BJ (cell line): ENCODE measurements at regions of chr1 and their contacts with region 1.

Region 1: DNA sequence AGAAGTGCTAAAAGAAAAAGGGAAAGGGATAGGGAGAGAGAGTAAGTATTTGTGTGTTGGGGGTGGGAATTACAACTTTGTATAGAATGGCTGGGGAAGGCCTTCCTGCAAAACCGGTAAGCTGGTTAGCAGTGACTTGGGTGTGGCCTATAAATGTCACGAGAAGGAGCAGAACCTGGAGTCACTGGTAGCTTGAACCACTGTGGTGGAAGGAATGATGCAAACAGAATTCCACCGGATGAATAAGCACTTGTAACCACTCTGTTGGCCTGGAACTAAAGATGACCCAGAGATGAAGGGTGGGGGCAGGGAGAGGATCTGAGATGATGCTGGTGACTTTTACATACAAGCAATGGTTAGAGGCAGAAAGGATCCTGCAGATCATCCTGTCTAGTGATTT is 8.9 kb downstream of the XKR8 start:
- DNase-seq: peak; percentile 92
- H3K4me3 ChIP-seq: no peak overlapping the region
- H3K27me3 ChIP-seq: no peaks in the 10 kb centered on the region
- CTCF ChIP-seq: no peak

Region 2: DNA sequence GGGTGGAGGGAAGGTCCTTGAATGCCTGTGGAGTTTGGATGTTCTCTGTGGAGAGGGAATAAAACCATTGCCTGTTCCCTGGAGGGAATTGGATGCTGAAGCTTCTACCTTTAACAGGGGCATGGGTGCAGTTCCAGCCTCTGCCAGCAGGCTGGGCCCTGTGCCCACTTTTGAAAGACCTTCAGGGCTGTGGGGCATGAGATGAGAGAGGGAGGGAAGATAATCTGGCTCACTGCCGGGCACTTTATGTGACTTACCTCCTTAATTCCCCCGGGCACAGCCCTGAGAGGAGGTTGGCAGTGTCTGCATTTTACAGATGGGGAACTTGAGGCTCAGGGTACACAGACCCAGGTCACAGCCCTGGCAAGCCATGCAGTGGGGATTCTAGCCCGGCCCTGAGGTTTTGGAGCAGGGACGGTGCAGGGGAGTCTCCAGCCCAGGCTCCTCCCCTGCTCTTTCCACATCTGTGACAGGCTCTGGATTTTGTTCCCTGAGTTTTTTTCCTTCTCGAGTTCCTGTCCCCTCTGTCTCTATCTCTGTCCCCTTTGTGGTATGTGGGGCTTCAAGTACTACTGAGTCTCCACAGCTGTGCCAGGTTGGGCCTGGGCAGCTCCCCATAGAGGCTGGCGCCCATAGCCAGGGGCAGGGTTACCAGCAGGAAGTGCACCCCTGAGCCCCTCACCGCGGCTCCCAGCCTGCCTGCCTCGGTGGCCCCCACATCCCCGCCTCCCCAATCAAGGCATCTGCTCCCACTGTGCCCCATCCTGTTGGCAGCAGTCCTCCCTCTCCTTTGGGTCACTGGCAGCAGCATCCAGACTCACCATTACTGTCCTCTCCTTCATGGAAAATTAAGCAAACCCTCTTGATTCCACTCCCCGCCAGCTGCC is 110.4 kb before region 1 on chr1:
- CTCF ChIA-PET with region 1: interaction called, 12 read pairs
- POLR2A ChIA-PET with region 1: no interaction called
- DNase-seq: peak; percentile 24
- H3K4me3 ChIP-seq: no peak overlapping the region
- H3K27me3 ChIP-seq: no peaks in the 10 kb centered on the region
- CTCF ChIP-seq: peak; percentile 98

Region 3: DNA sequence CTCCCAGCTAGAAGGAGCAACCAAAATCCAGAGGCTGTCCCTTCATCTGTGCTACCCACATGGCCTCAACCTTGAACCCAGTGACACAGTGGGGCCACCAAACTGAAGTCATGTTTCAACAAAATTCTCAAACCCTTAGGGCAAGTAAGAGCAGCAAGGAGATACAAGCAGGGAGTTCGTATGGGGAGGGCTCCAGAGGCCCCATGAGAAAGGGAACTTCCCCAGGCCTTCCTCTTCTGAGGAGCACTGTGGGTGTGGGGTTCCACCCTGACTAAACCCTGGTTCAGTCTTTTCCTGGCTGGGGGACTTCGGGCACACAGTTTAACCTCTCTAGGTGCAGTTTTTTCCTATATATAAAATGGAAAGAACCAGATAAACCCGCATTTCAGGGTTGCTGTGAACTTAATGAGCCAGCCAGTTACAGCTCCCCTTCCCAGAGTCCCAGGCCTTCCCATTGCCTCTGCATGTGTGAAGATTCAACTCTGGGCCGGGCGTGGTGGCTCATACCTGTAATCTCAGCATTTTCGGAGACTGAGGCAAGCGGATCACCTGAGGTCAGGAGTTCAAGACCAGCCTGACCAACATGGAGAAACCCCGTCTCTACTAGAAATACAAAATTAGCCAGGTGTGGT is 104.3 kb before region 1 on chr1:
- CTCF ChIA-PET with region 1: interaction called, 3 read pairs
- POLR2A ChIA-PET with region 1: interaction called, 10 read pairs
- DNase-seq: no peak
- H3K4me3 ChIP-seq: no peak overlapping the region
- H3K27me3 ChIP-seq: no peaks in the 10 kb centered on the region
- CTCF ChIP-seq: no peak